GM10248 (cell line): ENCODE measurements at regions of chr6 and their contacts with region 1.

Region 1: DNA sequence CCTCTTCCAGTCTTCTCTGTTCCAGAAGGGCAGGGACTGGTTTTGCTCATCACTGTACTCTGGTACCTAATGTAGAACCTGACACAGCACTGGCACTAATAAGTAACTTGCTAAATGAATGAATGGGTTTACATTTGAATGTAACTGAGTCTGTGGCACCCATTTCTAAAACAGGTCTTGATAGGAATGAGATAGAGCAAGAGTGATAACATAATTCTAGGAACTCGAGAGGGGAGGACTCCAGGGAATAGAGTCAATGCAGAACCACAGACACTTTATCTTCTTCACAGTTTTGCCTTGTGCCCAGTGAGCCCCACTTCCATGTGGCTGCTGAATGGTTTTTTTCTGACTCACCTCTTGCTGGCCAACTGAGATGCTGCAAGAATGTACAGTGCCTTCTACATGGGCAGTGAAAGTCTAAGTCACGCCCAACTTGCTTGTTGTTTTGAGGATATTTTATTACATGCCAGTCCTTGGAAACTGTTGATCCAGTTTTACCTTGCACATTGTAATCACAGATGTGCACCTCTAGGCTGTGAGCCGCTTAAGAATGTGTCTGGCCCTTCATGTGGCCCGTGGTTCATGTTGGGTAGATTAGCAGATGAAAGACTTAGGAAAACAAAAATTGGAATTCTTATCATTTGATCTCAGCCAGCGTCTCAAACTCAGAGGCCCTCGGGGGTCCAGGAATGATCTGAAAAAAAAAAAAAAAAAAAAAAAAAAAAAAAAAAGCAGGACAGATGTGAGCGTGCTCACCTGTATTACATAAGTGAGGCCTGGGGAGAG is 61.0 kb downstream of the TBC1D7 start:
- DNase-seq: no peak
- CTCF ChIP-seq: no peak

Region 2: GRCh38 chr6:13212096-13212495 is 55.2 kb before region 1 on chr6:
- CTCF ChIA-PET with region 1: no interaction called
- POLR2A ChIA-PET with region 1: interaction called, 10 read pairs
- DNase-seq: no peak
- CTCF ChIP-seq: no peak

Region 3: GRCh38 chr6:13281701-13282100 is 14.4 kb after region 1 on chr6:
- CTCF ChIA-PET with region 1: no interaction called
- POLR2A ChIA-PET with region 1: no interaction called
- DNase-seq: no peak
- CTCF ChIP-seq: no peak

Region 4: DNA sequence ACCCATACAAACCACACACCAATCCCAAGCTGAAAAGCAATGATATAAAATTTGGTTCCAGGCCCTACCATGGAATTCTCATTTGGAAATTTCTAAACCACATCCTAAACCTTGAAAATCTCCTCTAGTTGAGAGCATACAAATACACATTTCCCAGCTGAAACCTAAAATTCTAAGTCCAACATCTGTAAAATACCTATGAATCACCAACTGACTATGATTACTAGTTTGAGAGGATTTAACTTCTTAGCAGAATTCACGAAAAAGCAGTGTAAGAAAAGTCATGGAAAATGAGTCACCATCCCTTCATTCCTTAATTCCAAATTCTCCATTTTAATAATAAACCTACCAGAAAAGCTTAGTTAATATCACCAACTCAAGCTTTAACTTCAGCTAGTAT is 428.9 kb after region 1 on chr6:
- CTCF ChIA-PET with region 1: no interaction called
- POLR2A ChIA-PET with region 1: no interaction called
- DNase-seq: no peak
- CTCF ChIP-seq: no peak